Endothelial cell of umbilical vein (primary cell): ENCODE measurements at regions of chr2 and their contacts with region 1.

Region 1: DNA sequence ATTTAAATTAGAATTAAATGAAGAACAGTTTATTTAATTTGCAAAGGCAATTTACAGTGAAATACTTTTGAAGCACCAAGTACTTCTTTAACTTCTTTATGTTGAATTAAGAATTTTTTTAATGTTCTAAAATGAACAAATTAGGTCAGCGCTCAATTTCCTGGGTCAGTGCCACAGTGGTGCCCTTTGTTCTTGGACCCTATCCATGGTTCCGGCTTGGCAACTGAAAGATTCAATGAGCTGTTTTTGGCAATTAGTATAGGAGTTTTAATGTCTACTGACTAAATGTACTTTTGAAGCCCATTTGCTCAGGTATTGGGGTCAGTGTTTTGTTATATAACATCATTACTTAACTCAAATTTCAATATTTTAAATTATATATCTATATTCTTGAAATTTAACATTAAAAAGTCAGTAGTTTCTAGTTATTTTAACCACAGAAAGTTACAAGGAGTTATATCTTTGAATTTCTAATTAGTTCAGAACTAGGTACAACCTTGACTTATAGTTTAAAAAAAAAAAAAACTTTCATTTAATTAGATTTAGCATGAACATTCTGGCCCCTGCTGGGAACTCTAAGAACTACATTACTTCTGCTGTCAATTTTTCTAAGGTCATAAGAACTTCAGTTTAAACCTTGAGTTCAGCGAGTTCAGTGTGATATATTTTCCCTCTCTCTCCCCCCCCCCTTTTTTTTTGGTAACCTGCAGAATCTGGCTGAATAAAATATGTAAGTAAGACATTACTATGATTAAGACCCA is 7.6 kb upstream of the MSTN start:
- DNase-seq: peak; percentile 70
- H3K4me3 ChIP-seq: no peak overlapping the region
- H3K27ac ChIP-seq: no peak overlapping the region
- H3K4me1 ChIP-seq: no peaks in the 10 kb centered on the region
- H3K27me3 ChIP-seq: no peaks in the 10 kb centered on the region
- CTCF ChIP-seq: peak; percentile 17 to 35
- POLR2A ChIP-seq: no peak

Region 2: GRCh38 chr2:189751080-189751658 is 318.9 kb before region 1 on chr2:
- CTCF ChIA-PET with region 1: interaction called, 49 read pairs
- POLR2A ChIA-PET with region 1: no interaction called
- dilution Hi-C with region 1: no loop called
- intact Hi-C with region 1: loop called (anchors 1 kb)
- DNase-seq: peak; percentile 40
- H3K4me3 ChIP-seq: no peak overlapping the region
- H3K27ac ChIP-seq: no peak overlapping the region
- H3K4me1 ChIP-seq: no peaks in the 10 kb centered on the region
- H3K27me3 ChIP-seq: no peaks in the 10 kb centered on the region
- CTCF ChIP-seq: peak; percentile 52 to 59
- POLR2A ChIP-seq: no peak

Region 3: DNA sequence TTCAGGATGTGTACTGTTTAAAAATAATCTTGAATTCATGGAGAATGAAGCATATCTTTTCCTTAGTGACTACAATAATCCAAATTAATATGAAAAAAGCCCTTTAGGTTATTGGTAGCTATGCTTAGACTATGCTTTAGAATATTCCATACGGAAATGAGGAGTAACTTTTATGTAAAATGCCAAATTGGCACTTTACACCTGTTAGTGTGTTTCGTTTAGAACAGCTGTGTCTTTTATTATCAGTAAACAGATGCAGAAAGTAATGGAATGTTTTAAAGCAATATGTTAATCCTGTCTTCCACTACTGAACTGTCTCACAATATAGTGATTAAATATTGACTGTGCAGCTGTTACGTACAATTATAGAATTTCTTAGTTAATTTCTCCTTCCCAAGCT is 156.3 kb before region 1 on chr2:
- CTCF ChIA-PET with region 1: no interaction called
- POLR2A ChIA-PET with region 1: no interaction called
- dilution Hi-C with region 1: no loop called
- intact Hi-C with region 1: no loop called
- DNase-seq: no peak
- H3K4me3 ChIP-seq: no peak overlapping the region
- H3K27ac ChIP-seq: no peak overlapping the region
- H3K4me1 ChIP-seq: no peaks in the 10 kb centered on the region
- H3K27me3 ChIP-seq: no peaks in the 10 kb centered on the region
- CTCF ChIP-seq: no peak
- POLR2A ChIP-seq: no peak

Region 4: GRCh38 chr2:189982777-189983394 is 87.2 kb before region 1 on chr2:
- CTCF ChIA-PET with region 1: interaction called, 3 read pairs
- POLR2A ChIA-PET with region 1: no interaction called
- dilution Hi-C with region 1: no loop called
- intact Hi-C with region 1: loop called (anchors 2 kb)
- DNase-seq: peak; percentile 10
- H3K4me3 ChIP-seq: no peak overlapping the region
- H3K27ac ChIP-seq: no peak overlapping the region
- H3K4me1 ChIP-seq: no peaks in the 10 kb centered on the region
- H3K27me3 ChIP-seq: peaks cover 0 to 2% of the 10 kb centered on the region in 2 experiments
- CTCF ChIP-seq: peak; percentile 48 to 59
- POLR2A ChIP-seq: no peak

Region 5: GRCh38 chr2:190017837-190018236 is 52.3 kb before region 1 on chr2:
- CTCF ChIA-PET with region 1: no interaction called
- POLR2A ChIA-PET with region 1: no interaction called
- dilution Hi-C with region 1: no loop called
- intact Hi-C with region 1: no loop called
- DNase-seq: no peak
- H3K4me3 ChIP-seq: no peak overlapping the region
- H3K27ac ChIP-seq: no peak overlapping the region
- H3K4me1 ChIP-seq: no peaks in the 10 kb centered on the region
- H3K27me3 ChIP-seq: peaks cover 6 to 13% of the 10 kb centered on the region in 2 experiments
- CTCF ChIP-seq: no peak
- POLR2A ChIP-seq: no peak

Region 6: GRCh38 chr2:190802129-190802528 is 732.0 kb after region 1 on chr2:
- CTCF ChIA-PET with region 1: no interaction called
- POLR2A ChIA-PET with region 1: no interaction called
- dilution Hi-C with region 1: no loop called
- intact Hi-C with region 1: no loop called
- DNase-seq: no peak
- H3K4me3 ChIP-seq: no peak overlapping the region
- H3K27ac ChIP-seq: no peak overlapping the region
- H3K4me1 ChIP-seq: peaks cover 2% of the 10 kb centered on the region
- H3K27me3 ChIP-seq: no peaks in the 10 kb centered on the region
- CTCF ChIP-seq: no peak
- POLR2A ChIP-seq: no peak